Colonic mucosa (tissue), 4 donors: ENCODE measurements at regions of chr22 and their contacts with region 1.

Region 1: DNA sequence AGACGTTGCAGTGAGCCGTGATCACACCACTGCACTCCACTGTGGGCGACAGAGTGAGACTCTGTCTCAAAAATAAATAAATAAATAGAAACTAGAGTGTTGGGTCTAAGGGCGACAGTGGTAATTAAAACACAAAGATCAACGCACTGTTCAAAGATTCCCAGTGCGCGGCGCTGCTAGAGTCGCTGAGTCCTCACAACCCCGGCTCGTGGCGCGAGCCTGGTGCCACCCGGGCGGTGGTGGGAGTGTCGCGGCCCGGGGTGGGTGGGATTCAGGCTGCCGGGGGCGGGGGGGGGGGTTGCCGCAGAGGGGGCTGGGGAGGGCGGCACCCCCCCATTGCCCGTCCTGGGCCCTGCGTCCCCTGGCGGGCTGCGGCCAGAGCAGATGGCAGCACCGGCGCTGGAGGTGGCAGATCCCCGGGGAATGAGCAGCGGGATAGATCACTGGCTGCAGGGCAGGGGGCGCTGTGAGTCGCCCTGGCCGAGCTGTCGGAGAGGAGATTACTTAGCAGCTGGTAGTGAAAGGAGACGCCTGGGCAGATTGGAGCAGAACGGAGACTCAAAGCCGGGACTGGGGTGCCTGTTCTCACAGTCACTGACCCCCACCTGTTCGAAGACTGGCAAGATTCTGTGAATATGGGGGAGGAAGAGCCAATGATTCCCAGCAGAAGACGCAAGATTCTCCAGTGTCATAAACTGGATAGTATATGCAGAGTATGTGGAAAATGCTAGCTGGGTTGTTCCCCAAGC is 30.2 kb upstream of the APOBEC3A start:
- DNase-seq: peak; percentile 77
- H3K4me3 ChIP-seq: peak overlapping the region; percentile 29
- H3K27ac ChIP-seq: no peak overlapping the region
- H3K4me1 ChIP-seq: peaks cover 12% of the 10 kb centered on the region
- H3K27me3 ChIP-seq: no peaks in the 10 kb centered on the region
- CTCF ChIP-seq: peak; percentile 61

Region 2: GRCh38 chr22:38766076-38766777 is 161.0 kb before region 1 on chr22:
- intact Hi-C with region 1: no loop called
- DNase-seq: peak; percentile 77
- H3K4me3 ChIP-seq: no peak overlapping the region
- H3K27ac ChIP-seq: no peak overlapping the region
- H3K4me1 ChIP-seq: no peaks in the 10 kb centered on the region
- H3K27me3 ChIP-seq: no peaks in the 10 kb centered on the region
- CTCF ChIP-seq: peak; percentile 77

Region 3: DNA sequence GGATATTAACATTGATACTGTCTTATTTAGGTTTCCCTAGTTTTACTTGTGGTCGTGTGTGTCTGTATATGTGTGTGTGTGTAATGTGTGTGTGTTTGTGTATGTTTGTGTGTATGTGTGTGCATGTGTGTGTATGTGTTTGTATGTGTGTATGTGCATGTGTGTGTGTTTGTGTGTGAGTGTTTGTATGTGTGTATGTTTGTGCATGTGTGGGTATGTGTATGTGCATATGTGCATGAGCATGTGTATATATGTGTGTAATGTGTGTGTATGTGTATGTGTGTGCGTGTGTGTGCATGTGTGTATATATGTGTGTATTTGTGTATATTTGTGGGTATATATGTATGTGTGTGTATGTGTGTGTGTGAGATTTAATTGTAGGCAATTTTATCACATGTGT is 116.0 kb before region 1 on chr22:
- intact Hi-C with region 1: no loop called
- DNase-seq: no peak
- H3K4me3 ChIP-seq: no peak overlapping the region
- H3K27ac ChIP-seq: no peak overlapping the region
- H3K4me1 ChIP-seq: no peaks in the 10 kb centered on the region
- H3K27me3 ChIP-seq: no peaks in the 10 kb centered on the region
- CTCF ChIP-seq: no peak

Region 4: GRCh38 chr22:38872172-38872830 is 54.9 kb before region 1 on chr22 and contains the start of gene CBX6:
- intact Hi-C with region 1: loop called (anchors 5 kb)
- DNase-seq: peak; percentile 92
- H3K4me3 ChIP-seq: peak within 1 kb of the TSS; percentile 57
- H3K27ac ChIP-seq: peak within 1 kb of the TSS; percentile 84
- H3K4me1 ChIP-seq: no peaks in the 10 kb centered on the region
- H3K27me3 ChIP-seq: peaks cover 16% of the 10 kb centered on the region
- CTCF ChIP-seq: no peak
- total RNA-seq, gene CBX6: 9.2 to 14.5 TPM

Region 5: DNA sequence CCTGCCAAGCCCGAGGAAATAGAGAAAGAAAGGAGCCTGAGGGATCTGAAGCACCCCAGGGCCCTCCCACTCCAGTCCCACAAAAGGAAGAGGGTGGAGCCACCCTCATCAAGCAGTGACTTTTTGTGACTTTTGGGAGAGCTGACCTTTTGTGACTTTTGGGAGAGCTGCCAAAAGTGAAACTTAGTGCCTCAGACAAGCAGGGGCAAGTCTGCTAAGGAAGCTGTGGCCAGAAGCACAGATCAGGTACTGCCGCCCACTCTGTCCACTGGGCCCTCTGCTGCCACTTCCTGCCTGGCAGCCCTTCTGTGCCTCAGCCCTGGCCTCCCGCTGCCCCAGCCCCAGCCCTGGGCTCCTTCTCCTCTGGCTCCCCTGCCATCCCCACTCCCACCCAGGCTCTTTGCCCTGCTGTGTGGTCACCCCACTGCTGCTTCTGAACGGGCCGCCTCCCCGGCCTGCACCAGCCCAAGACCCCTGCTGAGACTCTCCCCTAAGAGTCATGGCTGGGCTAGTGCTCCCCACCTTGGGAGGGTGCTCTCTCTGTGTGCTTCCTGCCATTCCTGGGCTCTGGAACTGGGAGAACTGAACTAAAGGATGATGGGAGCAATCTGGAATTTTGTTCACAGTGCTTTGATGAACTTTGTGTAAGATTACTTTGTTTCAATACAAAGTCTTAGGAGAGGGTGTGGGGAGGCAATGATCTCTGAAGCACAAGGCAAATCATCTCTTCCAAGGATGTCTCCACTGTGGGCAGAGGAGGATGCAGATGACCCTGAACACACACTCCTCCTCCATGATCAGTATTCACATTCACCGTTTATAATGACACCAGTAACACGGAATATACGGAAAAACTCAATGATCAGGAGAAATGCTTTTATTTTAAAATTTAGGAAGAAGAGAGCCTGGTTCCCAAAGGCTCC is 170.2 kb after region 1 on chr22 and contains the start of gene APOBEC3H:
- intact Hi-C with region 1: no loop called
- DNase-seq: no peak
- H3K4me3 ChIP-seq: no peak within 1 kb of the TSS
- H3K27ac ChIP-seq: peak within 1 kb of the TSS; percentile 7
- H3K4me1 ChIP-seq: no peaks in the 10 kb centered on the region
- H3K27me3 ChIP-seq: no peaks in the 10 kb centered on the region
- CTCF ChIP-seq: no peak
- total RNA-seq, gene APOBEC3H: 0.45 TPM in 1 of 2 donors, not detected in the other

Region 6: DNA sequence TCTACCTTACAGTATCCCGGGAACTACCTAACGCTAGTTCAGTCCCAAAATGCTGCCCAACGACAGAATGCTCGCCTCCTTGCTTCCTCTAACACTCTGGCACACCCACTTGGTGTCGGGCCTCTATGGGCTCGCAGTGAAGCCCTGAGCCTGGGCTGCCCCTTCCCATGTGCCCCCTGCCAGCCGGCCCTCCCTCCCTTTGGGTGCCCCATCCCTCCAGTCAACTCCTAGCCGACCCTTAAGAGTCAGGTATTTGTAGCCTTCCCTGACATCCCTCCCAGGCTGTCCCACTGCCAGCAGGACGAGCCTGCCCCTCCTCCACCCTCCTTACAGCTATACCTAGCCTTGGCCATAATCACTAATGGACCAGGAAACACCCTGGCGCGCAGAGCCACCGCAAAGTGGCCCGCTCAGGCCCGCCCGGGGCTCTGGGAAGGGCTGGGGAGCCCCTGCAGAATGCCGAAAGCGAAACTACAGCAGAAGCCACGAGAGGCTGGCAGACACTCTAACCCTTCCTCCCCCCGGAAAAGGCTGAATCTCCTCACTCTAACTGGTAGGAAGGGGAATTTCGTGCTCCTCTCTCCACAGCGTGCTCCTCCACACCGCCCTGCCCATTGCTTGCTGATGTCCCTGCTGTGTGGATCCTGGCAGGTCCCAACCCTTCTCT is 217.0 kb after region 1 on chr22:
- intact Hi-C with region 1: no loop called
- DNase-seq: peak; percentile 64
- H3K4me3 ChIP-seq: peak overlapping the region; percentile 90
- H3K27ac ChIP-seq: peak overlapping the region; percentile 80
- H3K4me1 ChIP-seq: peaks cover 5% of the 10 kb centered on the region
- H3K27me3 ChIP-seq: no peaks in the 10 kb centered on the region
- CTCF ChIP-seq: no peak